ENCODE measurements at regions of chr5 and their contacts with region 1.

Region 1: DNA sequence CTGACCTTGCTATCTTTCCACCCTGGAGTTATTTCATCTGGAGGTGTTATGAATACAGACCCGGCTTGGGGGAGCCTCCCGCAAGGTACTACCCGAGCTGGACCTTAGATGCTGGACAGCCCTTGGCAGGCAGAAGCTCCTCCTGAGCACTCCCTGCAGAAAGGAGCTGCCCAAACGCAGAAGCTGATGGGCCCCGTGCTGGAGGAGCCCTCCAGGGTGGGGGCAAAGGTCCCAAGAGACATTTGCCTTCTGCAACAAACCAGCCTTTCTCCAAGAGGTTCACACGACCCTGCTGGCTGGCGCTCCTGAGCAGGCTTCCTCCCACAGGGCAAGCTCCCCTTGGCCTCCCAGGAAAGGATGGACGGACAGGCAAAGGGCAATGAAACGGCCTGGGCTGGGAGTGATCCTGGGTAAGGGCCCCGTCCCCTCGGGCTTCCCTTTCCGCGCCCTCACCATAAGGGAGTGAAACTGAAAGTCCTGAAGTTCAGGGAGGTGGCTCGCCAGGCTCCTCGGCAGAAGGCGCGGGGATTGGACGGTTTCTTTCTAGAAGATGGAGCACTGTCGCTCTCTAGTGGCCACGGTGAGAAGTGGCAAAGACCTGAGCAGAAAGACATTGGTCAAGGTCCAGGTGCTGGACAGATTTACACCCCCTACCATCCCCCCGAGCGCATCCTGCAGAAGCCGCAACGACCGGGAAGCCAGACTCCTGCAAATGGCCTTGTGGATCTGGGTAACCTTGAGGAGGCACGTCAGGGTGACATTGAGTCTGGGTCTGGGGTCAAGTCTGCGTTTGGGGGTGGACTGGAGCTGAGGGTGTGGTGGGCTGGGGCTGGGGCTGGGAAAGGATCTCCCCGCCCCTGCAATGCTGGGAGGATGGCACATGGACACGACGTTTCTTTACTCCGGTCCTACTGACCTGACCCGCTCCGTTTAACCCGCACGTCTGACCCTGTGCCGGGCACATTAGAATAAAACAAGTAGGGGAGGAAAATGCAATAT is 56.4 kb downstream of the NEURL1B start:
- DNase-seq: peak in 1 of 2 experiments; percentile 91
- H3K4me3 ChIP-seq: peak overlapping the region in 3 of 4 experiments; percentile 19 to 50 (median 35); a peak in 4 of 8 replicates
- H3K27ac ChIP-seq: no peak overlapping the region
- H3K4me1 ChIP-seq: peaks cover 7 to 25% (median 15%) of the 10 kb centered on the region in 4 experiments
- H3K27me3 ChIP-seq: peaks cover 0 to 11% (median 1%) of the 10 kb centered on the region in 4 experiments; a peak in 4 of 7 replicates
- CTCF ChIP-seq: peak; percentile 75 to 94 (median 91)
- EP300 ChIP-seq: no peak
- POLR2A ChIP-seq: no peak
- RAD21 ChIP-seq: peak; percentile 96 to 98

Region 2: GRCh38 chr5:172450861-172451695 is 246.3 kb before region 1 on chr5:
- CTCF ChIA-PET with region 1: interaction called, 24 read pairs
- POLR2A ChIA-PET with region 1: interaction called, 4 read pairs
- DNase-seq: peak in 1 of 2 experiments; percentile 81
- H3K4me3 ChIP-seq: no peak overlapping the region
- H3K27ac ChIP-seq: no peak overlapping the region
- H3K4me1 ChIP-seq: peaks cover 13 to 25% (median 21%) of the 10 kb centered on the region in 4 experiments
- H3K27me3 ChIP-seq: no peaks in the 10 kb centered on the region
- CTCF ChIP-seq: peak in 2 of 3 experiments; percentile 72 to 93; a peak in 3 of 4 replicates
- EP300 ChIP-seq: no peak
- POLR2A ChIP-seq: peak in 1 of 2 experiments; percentile 7; a peak in 1 of 3 replicates
- RAD21 ChIP-seq: peak; percentile 51 to 55

Region 3: GRCh38 chr5:172458976-172459782 is 238.2 kb before region 1 on chr5:
- CTCF ChIA-PET with region 1: interaction called, 24 read pairs
- POLR2A ChIA-PET with region 1: no interaction called
- DNase-seq: no peak
- H3K4me3 ChIP-seq: no peak overlapping the region
- H3K27ac ChIP-seq: no peak overlapping the region
- H3K4me1 ChIP-seq: peaks cover 9 to 12% (median 12%) of the 10 kb centered on the region in 4 experiments
- H3K27me3 ChIP-seq: no peaks in the 10 kb centered on the region; a peak in 3 of 7 replicates
- CTCF ChIP-seq: no peak
- EP300 ChIP-seq: no peak
- POLR2A ChIP-seq: no peak
- RAD21 ChIP-seq: no peak

Region 4: GRCh38 chr5:172640822-172641358 is 56.5 kb before region 1 on chr5 and contains the start of gene NEURL1B:
- CTCF ChIA-PET with region 1: interaction called, 25 read pairs
- POLR2A ChIA-PET with region 1: no interaction called
- DNase-seq: peak in 1 of 2 experiments; percentile 87
- H3K4me3 ChIP-seq: peak within 1 kb of the TSS; percentile 60 to 87 (median 68)
- H3K27ac ChIP-seq: no peak within 1 kb of the TSS
- H3K4me1 ChIP-seq: peaks cover 0 to 22% (median 7%) of the 10 kb centered on the region in 4 experiments; a peak in 3 of 7 replicates
- H3K27me3 ChIP-seq: peaks cover 0 to 24% (median 15%) of the 10 kb centered on the region in 4 experiments; a peak in 6 of 7 replicates
- CTCF ChIP-seq: peak in 1 of 3 experiments; percentile 4; a peak in 1 of 4 replicates
- EP300 ChIP-seq: no peak
- POLR2A ChIP-seq: no peak
- RAD21 ChIP-seq: no peak; a peak in 1 of 4 replicates
- total RNA-seq, gene NEURL1B: 5.7 and 6.1 TPM in 2 replicates

Region 5: DNA sequence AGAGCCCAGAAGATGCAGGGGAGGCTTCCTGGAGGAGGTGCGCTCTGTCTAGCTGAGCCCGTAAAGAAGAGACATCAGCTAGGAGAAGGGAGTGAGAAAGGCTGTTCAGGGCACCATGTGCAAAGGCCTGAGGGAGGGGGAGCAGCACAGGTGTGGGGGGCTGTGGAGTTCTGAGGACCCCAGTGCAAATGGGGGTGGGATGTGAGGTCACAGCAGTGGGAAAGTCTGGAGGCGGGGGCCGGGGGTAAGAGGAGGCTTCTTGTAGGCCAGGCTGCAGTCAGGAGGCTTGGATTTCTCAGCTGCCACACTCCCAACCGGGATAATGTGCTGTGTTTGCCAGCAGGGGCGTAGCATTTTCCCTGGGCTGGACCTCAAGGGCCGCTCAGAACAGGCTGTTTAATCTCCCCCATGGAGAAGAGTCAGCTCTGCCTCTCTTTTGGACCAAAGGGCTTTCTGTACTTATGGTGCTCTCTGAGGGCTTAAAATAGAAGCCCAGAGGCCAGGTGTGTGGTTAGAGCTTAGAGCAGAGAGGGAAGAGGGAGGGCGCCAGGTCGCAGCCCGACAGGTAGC is 50.6 kb before region 1 on chr5:
- CTCF ChIA-PET with region 1: interaction called, 25 read pairs
- POLR2A ChIA-PET with region 1: no interaction called
- DNase-seq: no peak
- H3K4me3 ChIP-seq: no peak overlapping the region
- H3K27ac ChIP-seq: no peak overlapping the region
- H3K4me1 ChIP-seq: peaks cover 5 to 26% (median 7%) of the 10 kb centered on the region in 4 experiments; a peak in 6 of 7 replicates
- H3K27me3 ChIP-seq: peaks cover 0 to 11% (median 9%) of the 10 kb centered on the region in 4 experiments; a peak in 4 of 7 replicates
- CTCF ChIP-seq: peak; percentile 62 to 68 (median 63)
- EP300 ChIP-seq: no peak
- POLR2A ChIP-seq: no peak
- RAD21 ChIP-seq: peak in 1 of 2 experiments; percentile 54; a peak in 3 of 4 replicates

Region 6: GRCh38 chr5:172666251-172666650 is 31.2 kb before region 1 on chr5:
- CTCF ChIA-PET with region 1: interaction called, 176 read pairs
- POLR2A ChIA-PET with region 1: interaction called, 3 read pairs
- DNase-seq: peak in 1 of 2 experiments; percentile 61
- H3K4me3 ChIP-seq: no peak overlapping the region
- H3K27ac ChIP-seq: no peak overlapping the region
- H3K4me1 ChIP-seq: no peaks in the 10 kb centered on the region
- H3K27me3 ChIP-seq: no peaks in the 10 kb centered on the region; a peak in 1 of 7 replicates
- CTCF ChIP-seq: peak; percentile 26 to 70 (median 63)
- EP300 ChIP-seq: no peak
- POLR2A ChIP-seq: no peak
- RAD21 ChIP-seq: peak; percentile 58 to 81

Region 7: GRCh38 chr5:172707285-172708182 is 10.1 kb after region 1 on chr5:
- CTCF ChIA-PET with region 1: interaction called, 30 read pairs
- POLR2A ChIA-PET with region 1: no interaction called
- DNase-seq: peak in 1 of 2 experiments; percentile 71
- H3K4me3 ChIP-seq: no peak overlapping the region
- H3K27ac ChIP-seq: no peak overlapping the region
- H3K4me1 ChIP-seq: peaks cover 0 to 3% (median 0%) of the 10 kb centered on the region in 4 experiments; a peak in 1 of 7 replicates
- H3K27me3 ChIP-seq: peaks cover 0 to 3% (median 0%) of the 10 kb centered on the region in 4 experiments; a peak in 3 of 7 replicates
- CTCF ChIP-seq: peak in 2 of 3 experiments; percentile 58 to 63; a peak in 3 of 4 replicates
- EP300 ChIP-seq: no peak
- POLR2A ChIP-seq: no peak
- RAD21 ChIP-seq: peak; percentile 82 to 88

Region 8: DNA sequence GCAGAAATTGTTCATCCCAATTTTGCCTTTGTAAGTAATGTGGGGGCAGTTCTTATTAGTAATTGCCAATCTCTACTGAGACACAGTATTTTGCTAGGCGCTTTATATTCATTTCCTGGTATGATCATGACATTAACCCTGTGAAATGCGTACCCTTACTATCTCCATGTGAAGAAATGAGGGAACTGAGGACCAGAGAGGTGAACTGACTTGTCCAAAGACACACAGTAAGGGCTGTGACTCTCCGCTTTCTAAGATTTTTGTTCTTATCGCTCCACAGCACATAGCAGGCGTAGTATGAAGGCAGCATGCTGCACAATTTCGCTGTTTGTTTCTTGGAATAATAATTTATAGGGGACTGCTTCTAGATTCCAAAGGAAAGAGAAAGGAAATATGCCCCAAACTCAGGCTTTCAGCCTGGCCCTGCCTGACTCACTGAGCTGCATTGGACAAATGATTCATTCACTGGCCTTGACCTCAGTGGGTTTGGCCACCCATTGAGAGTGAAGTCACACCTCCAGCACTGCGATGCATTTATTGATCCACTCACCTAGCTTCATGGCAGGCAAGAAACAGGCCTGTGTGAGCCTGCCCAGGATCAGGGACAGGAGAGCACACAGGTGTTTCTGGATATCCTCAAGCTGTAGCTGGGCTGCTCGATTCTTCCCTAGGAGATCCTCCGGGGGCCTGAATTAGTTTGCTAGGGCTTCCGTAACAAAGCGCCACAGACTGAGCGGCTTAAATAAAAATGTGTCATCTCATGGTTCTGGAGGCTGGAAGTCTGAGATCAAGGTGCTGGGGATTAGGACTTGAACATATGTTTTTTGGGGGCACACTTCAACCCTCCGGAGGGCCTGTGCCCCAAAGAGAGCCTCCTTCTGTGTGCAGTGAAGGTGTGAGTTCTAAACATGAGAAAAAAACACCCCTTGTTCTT is 80.7 kb after region 1 on chr5:
- CTCF ChIA-PET with region 1: no interaction called
- POLR2A ChIA-PET with region 1: no interaction called
- DNase-seq: no peak
- H3K4me3 ChIP-seq: no peak overlapping the region
- H3K27ac ChIP-seq: no peak overlapping the region
- H3K4me1 ChIP-seq: no peaks in the 10 kb centered on the region
- H3K27me3 ChIP-seq: peaks cover 0 to 8% (median 6%) of the 10 kb centered on the region in 4 experiments; a peak in 5 of 7 replicates
- CTCF ChIP-seq: no peak
- EP300 ChIP-seq: no peak
- POLR2A ChIP-seq: no peak
- RAD21 ChIP-seq: no peak